CD8-positive, alpha-beta memory T cell (primary cell): ENCODE measurements at regions of chr3 and their contacts with region 1.

Region 1: DNA sequence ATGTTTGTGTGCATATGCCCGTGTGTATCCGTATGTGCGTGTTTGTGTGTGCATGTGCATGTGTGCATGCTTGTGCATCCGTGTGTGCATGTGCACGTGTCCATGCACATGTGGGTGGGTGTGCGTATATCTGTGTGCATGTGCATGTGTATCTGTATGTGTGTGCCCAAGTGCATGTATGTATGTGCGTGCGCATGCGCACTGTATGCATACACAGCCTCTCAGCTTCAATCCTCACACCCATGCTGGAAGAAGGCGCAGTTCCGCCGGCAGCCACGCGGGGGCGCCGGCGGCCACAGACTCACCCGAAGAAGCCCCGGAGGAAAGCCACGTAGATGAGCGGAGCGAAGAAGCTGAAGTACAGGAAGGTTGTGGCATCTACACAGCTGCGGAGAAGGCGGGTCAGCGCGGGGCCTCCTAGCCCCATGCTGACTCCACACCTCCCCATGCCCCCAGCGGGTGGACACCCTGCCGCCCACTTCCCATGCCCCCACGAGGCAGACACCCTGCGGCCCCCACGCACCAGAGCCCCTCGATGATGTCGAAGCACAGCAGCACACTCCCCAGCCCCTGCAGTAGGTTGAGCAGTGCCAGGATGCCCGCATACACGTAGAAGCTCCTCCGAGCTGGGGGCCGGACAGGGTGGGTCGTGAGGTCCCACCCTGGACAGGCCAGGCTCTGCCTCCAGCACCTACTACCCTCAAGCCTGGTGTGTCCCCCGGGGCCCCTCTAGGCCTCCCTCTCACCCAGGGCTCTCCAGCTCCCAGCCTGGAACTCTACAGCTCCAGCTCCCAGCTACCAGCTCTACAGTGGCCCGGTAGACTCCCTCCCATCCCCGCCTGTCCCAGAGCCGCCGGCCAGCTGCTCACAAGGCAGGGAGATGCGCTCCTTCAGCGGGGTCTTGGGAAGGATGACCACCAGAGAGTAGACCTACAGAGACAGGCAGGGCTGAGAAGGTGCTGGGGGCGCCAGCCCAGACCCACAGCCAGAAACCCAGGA is 15.4 kb downstream of the TPRA1 start:
- DNase-seq: peak; percentile 72 to 89 (median 76)
- H3K4me3 ChIP-seq: no peak overlapping the region
- H3K4me3 Mint-ChIP-seq: peak overlapping the region in 6 of 7 donors; percentile 14 to 72 (median 45)
- H3K27ac ChIP-seq: no peak overlapping the region
- H3K27ac Mint-ChIP-seq: peak overlapping the region; percentile 0 to 71 (median 52)
- H3K4me1 ChIP-seq: peaks cover 8% of the 10 kb centered on the region
- H3K4me1 Mint-ChIP-seq: peaks cover 7 to 27% (median 13%) of the 10 kb centered on the region in 3 donors
- H3K27me3 ChIP-seq: no peaks in the 10 kb centered on the region
- H3K27me3 Mint-ChIP-seq: no peaks in the 10 kb centered on the region

Region 2: DNA sequence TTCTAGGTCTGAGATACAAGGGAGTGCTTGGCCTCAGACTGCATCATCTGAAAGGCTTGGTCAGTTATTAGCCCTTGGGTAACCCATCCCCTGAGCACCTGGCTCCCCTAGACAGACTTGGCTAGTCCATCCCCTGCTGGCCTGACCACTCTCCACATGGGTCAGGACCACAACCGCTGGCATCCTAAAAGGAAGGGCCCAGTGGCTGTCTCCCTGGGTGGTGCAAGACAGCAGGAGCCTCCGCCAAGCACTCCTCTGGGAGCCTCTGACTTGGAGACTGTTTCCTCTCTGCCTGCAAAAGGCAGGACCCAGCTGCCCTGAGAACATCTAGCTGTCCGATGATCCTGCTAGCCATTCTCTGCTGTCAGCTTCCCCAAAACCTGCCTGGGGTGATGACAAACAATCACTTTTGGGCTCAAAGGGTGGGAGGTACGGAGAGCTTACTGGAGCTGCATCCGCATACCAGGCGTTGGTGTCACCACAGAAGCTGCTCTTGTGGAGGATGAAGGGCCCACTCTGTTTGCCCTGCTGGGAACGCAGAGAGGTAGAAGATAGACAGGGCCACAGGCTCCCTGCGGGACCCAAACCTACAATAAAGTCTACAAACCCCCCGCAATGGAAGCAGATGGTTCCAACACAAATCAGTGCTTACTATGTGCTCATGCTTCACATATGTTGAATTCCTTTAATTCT is 179.4 kb before region 1 on chr3:
- CTCF ChIA-PET with region 1: no interaction called
- POLR2A ChIA-PET with region 1: no interaction called
- DNase-seq: no peak
- H3K4me3 ChIP-seq: no peak overlapping the region
- H3K4me3 Mint-ChIP-seq: no peak overlapping the region
- H3K27ac ChIP-seq: no peak overlapping the region
- H3K27ac Mint-ChIP-seq: no peak overlapping the region
- H3K4me1 ChIP-seq: no peaks in the 10 kb centered on the region
- H3K4me1 Mint-ChIP-seq: no peaks in the 10 kb centered on the region
- H3K27me3 ChIP-seq: no peaks in the 10 kb centered on the region
- H3K27me3 Mint-ChIP-seq: peaks cover 10 to 11% of the 10 kb centered on the region in 2 donors

Region 3: DNA sequence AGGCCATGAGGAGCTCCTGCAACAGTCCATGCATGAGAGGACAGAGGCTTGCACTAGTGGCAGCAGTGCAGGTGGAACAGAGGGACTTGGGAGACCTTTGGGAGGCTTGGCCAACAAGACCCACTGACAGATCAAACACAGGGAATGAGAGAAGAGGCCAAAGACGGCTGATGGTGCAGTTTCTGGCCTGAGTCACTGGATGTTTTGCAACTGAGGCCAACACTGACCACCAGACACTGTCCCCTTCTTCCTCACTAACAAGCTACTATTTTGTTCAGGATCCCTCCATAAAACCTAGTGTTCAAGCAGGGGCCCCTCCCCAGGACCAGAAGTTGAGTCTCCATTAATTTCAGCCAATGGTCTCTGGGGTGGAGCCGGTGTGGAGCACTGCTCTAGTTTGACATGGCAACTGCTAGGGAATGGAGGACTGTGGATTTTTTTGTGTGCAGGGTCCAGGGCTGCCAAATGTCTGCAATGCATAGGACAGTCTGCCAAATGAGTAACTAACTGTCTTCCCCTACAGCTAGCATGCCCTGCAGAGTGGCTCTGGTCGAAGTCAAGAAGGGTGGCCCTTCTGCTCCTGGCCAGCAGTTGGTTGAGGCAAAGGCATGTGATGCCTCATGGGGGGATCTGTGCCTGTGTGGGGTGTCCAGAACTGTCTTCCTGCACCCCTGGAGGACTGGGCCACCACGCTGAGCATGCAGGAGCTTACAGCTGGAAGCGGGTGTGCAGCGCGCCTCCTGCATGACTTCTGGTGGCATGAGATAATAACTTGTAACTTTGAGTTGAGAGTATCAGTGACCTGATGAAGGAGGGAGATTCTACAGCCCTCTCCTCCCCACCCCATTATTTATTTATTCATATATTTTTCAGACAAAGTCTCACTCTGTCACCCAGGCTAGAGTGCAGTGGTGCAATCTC is 10.6 kb after region 1 on chr3:
- CTCF ChIA-PET with region 1: interaction called, 48 read pairs
- POLR2A ChIA-PET with region 1: interaction called, 7 read pairs
- DNase-seq: no peak
- H3K4me3 ChIP-seq: no peak overlapping the region
- H3K4me3 Mint-ChIP-seq: peak overlapping the region in 2 of 7 donors; percentile 41 to 77
- H3K27ac ChIP-seq: no peak overlapping the region
- H3K27ac Mint-ChIP-seq: peak overlapping the region in 4 of 8 donors; percentile 8 to 54 (median 36)
- H3K4me1 ChIP-seq: peaks cover 7% of the 10 kb centered on the region
- H3K4me1 Mint-ChIP-seq: peaks cover 39 to 62% (median 44%) of the 10 kb centered on the region in 3 donors
- H3K27me3 ChIP-seq: no peaks in the 10 kb centered on the region
- H3K27me3 Mint-ChIP-seq: no peaks in the 10 kb centered on the region

Region 4: GRCh38 chr3:127598841-127599570 is 23.8 kb after region 1 on chr3:
- CTCF ChIA-PET with region 1: interaction called, 34 read pairs
- POLR2A ChIA-PET with region 1: interaction called, 3 read pairs
- DNase-seq: no peak
- H3K4me3 ChIP-seq: peak overlapping the region; percentile 71
- H3K4me3 Mint-ChIP-seq: peak overlapping the region; percentile 76 to 95 (median 84)
- H3K27ac ChIP-seq: peak overlapping the region; percentile 83
- H3K27ac Mint-ChIP-seq: peak overlapping the region; percentile 61 to 98 (median 88)
- H3K4me1 ChIP-seq: peaks cover 18% of the 10 kb centered on the region
- H3K4me1 Mint-ChIP-seq: peaks cover 19 to 33% (median 26%) of the 10 kb centered on the region in 3 donors
- H3K27me3 ChIP-seq: no peaks in the 10 kb centered on the region
- H3K27me3 Mint-ChIP-seq: no peaks in the 10 kb centered on the region

Region 5: DNA sequence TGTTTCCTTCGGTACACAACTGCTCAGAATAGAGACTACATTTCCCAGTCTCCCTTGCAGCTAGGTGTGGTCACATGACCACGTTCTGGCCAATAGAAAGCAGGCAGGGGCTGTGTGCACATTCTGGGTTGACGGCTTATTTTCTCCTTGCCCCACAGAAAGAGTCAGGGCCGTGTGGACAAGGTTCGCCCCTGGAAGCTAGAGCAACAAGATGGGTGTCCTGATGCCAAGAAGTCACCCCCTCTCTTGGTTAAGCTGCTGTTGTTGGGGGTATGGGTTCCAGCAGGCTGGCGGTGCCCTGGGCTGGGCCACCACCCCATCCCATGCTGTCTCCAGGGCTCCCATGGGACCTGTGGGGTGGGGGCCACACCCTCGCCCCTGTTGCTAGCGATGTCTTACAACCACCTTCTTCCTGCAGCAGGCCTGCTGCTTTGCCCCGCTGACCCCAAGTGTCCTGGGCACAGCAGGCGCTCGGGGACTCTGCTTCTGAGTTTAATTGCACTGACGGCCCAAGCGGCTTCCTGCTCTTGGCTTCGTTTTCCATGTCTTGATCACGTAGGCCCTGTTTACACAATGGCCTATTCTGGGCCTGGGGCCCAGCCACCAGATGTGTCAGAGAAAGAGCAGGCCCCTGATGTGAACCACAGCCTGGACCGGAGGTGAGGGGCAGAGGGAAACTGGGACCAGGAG is 122.5 kb after region 1 on chr3:
- CTCF ChIA-PET with region 1: interaction called, 20 read pairs
- POLR2A ChIA-PET with region 1: interaction called, 3 read pairs
- DNase-seq: peak; percentile 21 to 63 (median 34)
- H3K4me3 ChIP-seq: no peak overlapping the region
- H3K4me3 Mint-ChIP-seq: peak overlapping the region in 1 of 7 donors; percentile 19
- H3K27ac ChIP-seq: no peak overlapping the region
- H3K27ac Mint-ChIP-seq: peak overlapping the region in 1 of 8 donors; percentile 45
- H3K4me1 ChIP-seq: no peaks in the 10 kb centered on the region
- H3K4me1 Mint-ChIP-seq: peaks cover 4 to 8% (median 6%) of the 10 kb centered on the region in 3 donors
- H3K27me3 ChIP-seq: no peaks in the 10 kb centered on the region
- H3K27me3 Mint-ChIP-seq: peaks cover 3 to 5% of the 10 kb centered on the region in 2 donors